ENCODE measurements at regions of chr3 and their contacts with region 1.

Region 1: DNA sequence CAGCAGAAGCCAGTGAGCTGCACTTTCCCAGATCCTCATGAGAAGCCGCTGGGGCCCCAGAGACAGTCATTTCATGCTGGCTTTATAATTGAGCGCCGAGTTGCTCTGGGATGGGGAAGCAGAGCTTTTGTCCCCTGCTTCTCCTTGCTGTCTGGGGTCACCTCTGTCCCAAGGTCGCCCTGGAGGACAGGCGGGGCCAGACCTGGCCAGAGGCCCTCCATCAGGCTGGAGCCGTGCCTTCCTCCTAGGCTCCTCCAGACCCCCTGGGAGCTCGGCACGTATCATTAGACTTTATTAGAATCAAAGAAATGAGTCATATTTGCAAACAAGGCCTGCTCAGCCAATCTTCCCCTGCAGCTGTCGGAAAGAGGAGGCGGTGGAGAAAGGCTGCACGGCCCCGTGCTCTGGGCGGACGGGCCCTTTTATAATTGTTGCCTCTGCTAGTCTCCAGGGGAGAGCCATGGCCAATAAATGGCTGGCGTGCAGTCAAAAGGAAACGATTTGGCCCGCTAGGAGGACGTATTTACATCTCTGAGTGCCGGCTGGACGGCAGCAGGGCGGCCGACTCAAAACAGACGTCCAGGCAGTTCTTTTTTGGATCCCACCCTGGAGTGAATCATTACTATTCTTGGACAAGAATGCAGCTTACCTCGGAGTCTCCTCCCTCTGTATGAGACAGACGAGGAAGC is 50.4 kb downstream of the SLC6A6 start:
- DNase-seq: peak; percentile 71 to 97 (median 78)

Region 2: GRCh38 chr3:14405360-14406238 is 47.2 kb before region 1 on chr3:
- intact Hi-C with region 1: loop called (anchors 5 kb)
- DNase-seq: peak in 1 of 10 donors; percentile 67